ENCODE measurements at regions of chr13 and their contacts with region 1.

Region 1: DNA sequence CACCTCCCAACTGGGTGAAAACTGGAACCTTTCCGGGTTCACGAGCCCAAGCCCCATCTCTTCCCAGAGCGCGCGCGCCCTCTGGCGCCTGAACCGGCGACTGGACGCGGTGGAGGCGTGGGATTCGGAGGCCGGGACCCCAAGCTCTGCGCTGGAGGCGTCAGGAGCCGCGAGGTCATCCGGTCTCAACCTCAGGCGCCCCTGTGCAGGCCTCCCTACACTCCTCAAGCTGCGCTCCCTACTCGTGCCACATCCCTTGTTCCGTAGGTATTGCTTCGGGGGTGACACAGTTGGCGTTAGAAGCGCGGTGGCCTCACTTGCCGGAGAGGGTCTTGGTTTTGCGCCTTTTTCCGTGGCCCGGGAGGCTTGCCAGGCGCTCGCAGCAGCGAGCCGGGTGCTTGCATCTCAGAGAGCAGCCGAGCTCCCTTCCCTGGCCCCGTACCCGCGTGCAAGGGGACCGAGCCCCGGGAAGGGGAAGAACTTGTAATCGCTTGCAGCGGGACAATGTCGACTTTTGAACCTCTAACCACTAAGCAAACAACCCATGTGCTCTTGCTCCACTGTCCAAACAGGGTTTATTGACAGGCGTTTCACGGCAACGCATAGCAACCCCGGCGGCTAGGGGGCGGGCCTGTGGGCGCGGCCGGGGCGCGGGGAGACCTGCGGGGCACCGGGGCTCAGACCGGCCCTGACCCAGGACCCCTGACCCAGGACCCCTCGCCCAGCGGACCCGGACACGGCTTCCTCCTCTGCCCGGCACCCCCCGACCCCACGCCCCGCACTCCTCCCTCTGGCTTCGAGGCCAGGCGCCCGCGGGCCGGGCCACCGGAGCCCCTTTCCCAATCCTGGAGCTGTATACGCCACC is 8.5 kb downstream of the CDX2 start:
- DNase-seq: no peak
- ATAC-seq: peak; percentile 80
- H3K4me3 ChIP-seq: no peak overlapping the region; the same call in 1 of the 2 replicates
- H3K27ac ChIP-seq: no peak overlapping the region
- H3K4me1 ChIP-seq: no peaks in the 10 kb centered on the region
- H3K27me3 ChIP-seq: peaks cover 6 to 7% of the 10 kb centered on the region in 2 experiments; a peak in 3 of 4 replicates
- CTCF ChIP-seq: peak; percentile 47 to 58 (median 58); a peak in 5 of 6 replicates
- EP300 ChIP-seq: no peak
- POLR2A ChIP-seq: no peak
- RAD21 ChIP-seq: peak; percentile 44

Region 2: GRCh38 chr13:27374650-27375049 is 585.9 kb before region 1 on chr13:
- CTCF ChIA-PET with region 1: interaction called, 6 read pairs
- POLR2A ChIA-PET with region 1: no interaction called
- RAD21 ChIA-PET with region 1: no interaction called
- SMC1A ChIA-PET with region 1: interaction called, 3 read pairs
- in situ Hi-C with region 1: no loop called
- intact Hi-C with region 1: loop called (anchors 5 kb)
- DNase-seq: no peak
- ATAC-seq: peak; percentile 96
- H3K4me3 ChIP-seq: no peak overlapping the region
- H3K27ac ChIP-seq: no peak overlapping the region
- H3K4me1 ChIP-seq: no peaks in the 10 kb centered on the region
- H3K27me3 ChIP-seq: no peaks in the 10 kb centered on the region
- CTCF ChIP-seq: peak; percentile 68 to 86 (median 80)
- EP300 ChIP-seq: no peak
- POLR2A ChIP-seq: no peak
- RAD21 ChIP-seq: peak; percentile 84

Region 3: GRCh38 chr13:27868641-27869435 is 91.8 kb before region 1 on chr13:
- CTCF ChIA-PET with region 1: interaction called, 126 read pairs
- POLR2A ChIA-PET with region 1: no interaction called
- RAD21 ChIA-PET with region 1: interaction called, 74 read pairs
- SMC1A ChIA-PET with region 1: interaction called, 43 read pairs
- in situ Hi-C with region 1: no loop called
- intact Hi-C with region 1: loop called (anchors 2 kb)
- DNase-seq: no peak
- ATAC-seq: peak; percentile 19; the same call in 1 of the 3 replicates
- H3K4me3 ChIP-seq: no peak overlapping the region
- H3K27ac ChIP-seq: no peak overlapping the region
- H3K4me1 ChIP-seq: no peaks in the 10 kb centered on the region
- H3K27me3 ChIP-seq: no peaks in the 10 kb centered on the region; a peak in 1 of 4 replicates
- CTCF ChIP-seq: peak; percentile 43 to 55 (median 48); a peak in 5 of 6 replicates
- EP300 ChIP-seq: no peak
- POLR2A ChIP-seq: no peak
- RAD21 ChIP-seq: peak; percentile 50

Region 4: GRCh38 chr13:27985600-27985999 is 25.0 kb after region 1 on chr13:
- CTCF ChIA-PET with region 1: interaction called, 51 read pairs
- POLR2A ChIA-PET with region 1: no interaction called
- RAD21 ChIA-PET with region 1: interaction called, 7 read pairs
- SMC1A ChIA-PET with region 1: interaction called, 5 read pairs
- in situ Hi-C with region 1: no loop called
- intact Hi-C with region 1: no loop called
- DNase-seq: no peak
- ATAC-seq: no peak
- H3K4me3 ChIP-seq: no peak overlapping the region
- H3K27ac ChIP-seq: no peak overlapping the region
- H3K4me1 ChIP-seq: no peaks in the 10 kb centered on the region
- H3K27me3 ChIP-seq: peaks cover 8 to 10% of the 10 kb centered on the region in 2 experiments; a peak in 3 of 4 replicates
- CTCF ChIP-seq: no peak
- EP300 ChIP-seq: no peak
- POLR2A ChIP-seq: no peak
- RAD21 ChIP-seq: no peak